GM12878 (cell line): ENCODE measurements at regions of chr1 and their contacts with region 1.

Region 1: DNA sequence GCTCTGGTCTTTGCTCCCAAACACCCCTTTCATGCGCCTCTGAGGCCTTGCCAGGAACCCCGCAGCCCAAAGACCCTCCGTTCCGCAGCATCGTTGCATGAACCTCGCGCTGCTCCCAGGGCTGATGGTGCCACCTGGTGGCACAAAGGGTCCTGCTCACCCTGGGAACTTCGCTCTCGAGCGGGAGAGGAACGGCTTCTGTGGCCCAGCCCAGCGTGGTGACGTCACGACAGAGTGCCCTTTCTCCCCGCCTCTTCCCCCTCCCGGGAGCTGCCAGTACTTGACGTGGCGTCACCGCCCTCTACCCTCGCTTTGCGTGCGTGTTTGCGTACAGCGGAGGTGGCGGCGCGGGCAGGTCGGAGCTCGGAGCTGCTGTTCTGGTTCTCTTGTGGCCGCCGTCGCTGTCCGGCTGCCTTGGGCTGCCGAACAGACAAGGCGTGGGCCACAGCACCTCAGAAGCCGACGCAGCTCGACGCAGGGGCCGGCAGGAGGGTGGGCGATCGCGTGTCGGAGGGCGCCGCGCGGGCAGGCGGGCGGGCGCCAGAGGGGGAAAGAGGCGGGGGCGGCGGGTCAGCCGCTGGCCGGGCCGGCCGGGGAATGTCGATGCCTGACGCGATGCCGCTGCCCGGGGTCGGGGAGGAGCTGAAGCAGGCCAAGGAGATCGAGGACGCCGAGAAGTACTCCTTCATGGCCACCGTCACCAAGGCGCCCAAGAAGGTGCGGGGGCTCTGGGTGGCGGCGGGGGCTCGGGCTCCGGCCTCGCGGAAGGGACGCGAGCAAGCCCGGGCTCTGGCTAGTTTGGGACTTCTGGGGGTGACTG is at the start of gene AHCYL1:
- DNase-seq: peak; percentile 94
- ATAC-seq: peak; percentile 95
- H3K4me3 ChIP-seq: peak within 1 kb of the TSS; percentile 79
- H3K27ac ChIP-seq: peak within 1 kb of the TSS; percentile 76
- H3K4me1 ChIP-seq: peaks cover 7% of the 10 kb centered on the region
- H3K27me3 ChIP-seq: no peaks in the 10 kb centered on the region
- CTCF ChIP-seq: peak; percentile 94 to 99 (median 95); a peak in 5 of 6 replicates
- EP300 ChIP-seq: peak in 1 of 2 experiments; percentile 54; a peak in 1 of 4 replicates
- POLR2A ChIP-seq: peak; percentile 98
- RAD21 ChIP-seq: peak; percentile 98
- polyA plus RNA-seq, gene AHCYL1: 24.7 to 26.1 TPM

Region 2: DNA sequence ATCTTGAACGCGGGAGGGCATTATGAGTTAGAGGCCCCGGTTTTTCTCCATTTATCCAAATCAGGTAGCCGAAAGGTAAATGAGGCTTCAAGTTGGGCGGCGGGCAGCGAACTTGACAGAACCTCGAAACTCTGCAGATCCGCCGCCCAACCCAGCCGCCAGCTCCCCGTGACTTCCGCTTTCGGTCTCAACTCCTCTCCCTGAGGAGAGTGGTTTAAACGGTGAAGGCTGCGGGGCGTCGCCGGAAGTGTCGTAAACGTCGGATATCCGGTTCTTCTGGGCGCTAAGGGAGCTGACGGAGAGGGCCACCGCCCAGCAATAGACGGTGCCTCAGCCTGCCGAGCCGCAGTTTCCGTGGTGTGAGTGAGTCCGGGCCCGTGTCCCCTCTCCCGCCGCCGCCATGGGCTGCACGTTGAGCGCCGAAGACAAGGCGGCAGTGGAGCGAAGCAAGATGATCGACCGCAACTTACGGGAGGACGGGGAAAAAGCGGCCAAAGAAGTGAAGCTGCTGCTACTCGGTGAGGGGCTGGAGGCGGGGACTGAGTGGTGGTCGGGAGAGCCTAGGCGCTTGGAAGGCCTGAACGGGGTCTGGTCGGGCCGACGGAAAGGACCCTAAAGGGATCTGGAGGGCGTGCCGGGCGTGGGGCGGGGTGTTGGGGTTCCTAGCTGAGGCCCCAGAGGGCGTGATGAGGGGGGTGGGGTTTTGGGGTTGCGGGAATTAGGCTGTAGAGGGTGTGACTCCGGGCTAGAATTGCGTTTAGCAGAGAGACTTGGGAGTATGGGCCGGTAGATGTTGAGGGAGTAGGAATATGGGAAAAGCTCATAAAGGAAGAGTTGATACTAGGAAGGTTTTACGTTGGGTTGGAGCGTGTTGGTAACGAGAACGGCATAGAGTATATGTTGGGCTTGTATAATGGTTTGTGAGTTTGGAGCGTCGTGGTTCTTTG is 436.1 kb before region 1 on chr1 and contains the start of gene GNAI3:
- CTCF ChIA-PET with region 1: interaction called, 49 read pairs
- POLR2A ChIA-PET with region 1: interaction called, 7 read pairs
- RAD21 ChIA-PET with region 1: interaction called, 38 read pairs
- SMC1A ChIA-PET with region 1: interaction called, 17 read pairs
- in situ Hi-C with region 1: loop called (anchors 5 kb)
- intact Hi-C with region 1: loop called (anchors 1 kb)
- DNase-seq: peak; percentile 85
- ATAC-seq: peak; percentile 95
- H3K4me3 ChIP-seq: peak within 1 kb of the TSS; percentile 92
- H3K27ac ChIP-seq: peak within 1 kb of the TSS; percentile 96
- H3K4me1 ChIP-seq: peaks cover 6% of the 10 kb centered on the region
- H3K27me3 ChIP-seq: no peaks in the 10 kb centered on the region
- CTCF ChIP-seq: no peak
- EP300 ChIP-seq: peak; percentile 13 to 61; a peak in 3 of 4 replicates
- POLR2A ChIP-seq: peak; percentile 99
- RAD21 ChIP-seq: no peak
- polyA plus RNA-seq, gene GNAI3: 6.2 TPM

Region 3: DNA sequence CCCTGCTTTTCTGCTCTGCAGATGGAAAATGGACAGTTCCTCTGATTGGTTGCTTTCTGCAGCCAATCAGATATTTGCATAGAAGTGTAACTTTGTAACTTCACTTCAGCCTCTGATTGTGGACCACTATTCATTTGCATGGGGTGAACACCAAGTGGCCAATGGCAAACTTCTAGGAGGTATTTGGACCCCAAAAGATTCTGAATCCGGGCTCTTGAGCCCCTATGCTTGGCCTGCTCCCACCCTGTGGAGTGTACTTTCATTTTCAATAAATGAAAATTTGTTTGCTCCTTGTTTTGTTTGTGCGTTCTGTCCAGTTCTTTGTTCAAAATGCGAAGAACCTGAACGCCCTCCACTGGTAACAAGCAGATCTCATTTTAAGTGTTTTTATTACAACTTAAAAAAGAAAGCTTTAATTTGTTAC is 335.2 kb before region 1 on chr1:
- CTCF ChIA-PET with region 1: interaction called, 53 read pairs
- POLR2A ChIA-PET with region 1: no interaction called
- RAD21 ChIA-PET with region 1: interaction called, 34 read pairs
- SMC1A ChIA-PET with region 1: interaction called, 15 read pairs
- in situ Hi-C with region 1: loop called (anchors 5 kb)
- intact Hi-C with region 1: loop called (anchors 5 kb)
- DNase-seq: no peak
- ATAC-seq: no peak
- H3K4me3 ChIP-seq: no peak overlapping the region
- H3K27ac ChIP-seq: no peak overlapping the region
- H3K4me1 ChIP-seq: no peaks in the 10 kb centered on the region
- H3K27me3 ChIP-seq: no peaks in the 10 kb centered on the region
- CTCF ChIP-seq: peak in 1 of 3 experiments; percentile 24; a peak in 1 of 6 replicates
- EP300 ChIP-seq: no peak
- POLR2A ChIP-seq: no peak
- RAD21 ChIP-seq: peak; percentile 29; the same call in 1 of the 2 replicates

Region 4: GRCh38 chr1:109773146-109773899 is 211.3 kb before region 1 on chr1:
- CTCF ChIA-PET with region 1: interaction called, 759 read pairs
- POLR2A ChIA-PET with region 1: interaction called, 23 read pairs
- RAD21 ChIA-PET with region 1: interaction called, 390 read pairs
- SMC1A ChIA-PET with region 1: interaction called, 431 read pairs
- in situ Hi-C with region 1: loop called (anchors 5 kb)
- intact Hi-C with region 1: loop called (anchors 1 kb)
- DNase-seq: peak; percentile 28
- ATAC-seq: peak; percentile 94
- H3K4me3 ChIP-seq: no peak overlapping the region
- H3K27ac ChIP-seq: no peak overlapping the region
- H3K4me1 ChIP-seq: no peaks in the 10 kb centered on the region
- H3K27me3 ChIP-seq: peaks cover 0 to 2% of the 10 kb centered on the region in 2 experiments; a peak in 1 of 4 replicates
- CTCF ChIP-seq: peak; percentile 90 to 97 (median 92)
- EP300 ChIP-seq: no peak
- POLR2A ChIP-seq: no peak
- RAD21 ChIP-seq: peak; percentile 98

Region 5: GRCh38 chr1:109816175-109816811 is 168.4 kb before region 1 on chr1:
- CTCF ChIA-PET with region 1: interaction called, 17 read pairs
- POLR2A ChIA-PET with region 1: interaction called, 5 read pairs
- RAD21 ChIA-PET with region 1: interaction called, 5 read pairs
- SMC1A ChIA-PET with region 1: interaction called, 10 read pairs
- in situ Hi-C with region 1: no loop called
- intact Hi-C with region 1: no loop called
- DNase-seq: peak; percentile 90
- ATAC-seq: peak; percentile 96
- H3K4me3 ChIP-seq: peak overlapping the region; percentile 31; the same call in 1 of the 2 replicates
- H3K27ac ChIP-seq: peak overlapping the region; percentile 57
- H3K4me1 ChIP-seq: peaks cover 27% of the 10 kb centered on the region
- H3K27me3 ChIP-seq: no peaks in the 10 kb centered on the region
- CTCF ChIP-seq: no peak
- EP300 ChIP-seq: peak; percentile 49 to 64; a peak in 3 of 4 replicates
- POLR2A ChIP-seq: no peak
- RAD21 ChIP-seq: 0 out of 2 replicates have a peak, but pooled peaks have one; percentile 7

Region 6: DNA sequence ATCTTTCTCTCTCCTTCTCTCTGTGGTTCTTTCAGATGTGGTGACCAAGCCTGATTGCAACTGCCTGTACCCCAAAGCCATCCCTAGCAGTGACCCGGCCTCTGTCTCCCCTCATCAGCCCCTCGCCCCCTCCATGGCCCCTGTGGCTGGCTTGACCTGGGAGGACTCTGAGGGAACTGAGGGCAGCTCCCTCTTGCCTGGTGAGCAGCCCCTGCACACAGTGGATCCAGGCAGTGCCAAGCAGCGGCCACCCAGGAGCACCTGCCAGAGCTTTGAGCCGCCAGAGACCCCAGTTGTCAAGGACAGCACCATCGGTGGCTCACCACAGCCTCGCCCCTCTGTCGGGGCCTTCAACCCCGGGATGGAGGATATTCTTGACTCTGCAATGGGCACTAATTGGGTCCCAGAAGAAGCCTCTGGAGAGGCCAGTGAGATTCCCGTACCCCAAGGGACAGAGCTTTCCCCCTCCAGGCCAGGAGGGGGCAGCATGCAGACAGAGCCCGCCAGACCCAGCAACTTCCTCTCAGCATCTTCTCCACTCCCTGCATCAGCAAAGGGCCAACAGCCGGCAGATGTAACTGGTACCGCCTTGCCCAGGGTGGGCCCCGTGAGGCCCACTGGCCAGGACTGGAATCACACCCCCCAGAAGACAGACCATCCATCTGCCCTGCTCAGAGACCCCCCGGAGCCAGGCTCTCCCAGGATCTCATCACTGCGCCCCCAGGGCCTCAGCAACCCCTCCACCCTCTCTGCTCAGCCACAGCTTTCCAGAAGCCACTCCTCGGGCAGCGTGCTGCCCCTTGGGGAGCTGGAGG is 61.3 kb before region 1 on chr1:
- CTCF ChIA-PET with region 1: interaction called, 12 read pairs
- POLR2A ChIA-PET with region 1: no interaction called
- RAD21 ChIA-PET with region 1: interaction called, 11 read pairs
- SMC1A ChIA-PET with region 1: interaction called, 7 read pairs
- in situ Hi-C with region 1: no loop called
- intact Hi-C with region 1: no loop called
- DNase-seq: no peak
- ATAC-seq: peak; percentile 76
- H3K4me3 ChIP-seq: no peak overlapping the region
- H3K27ac ChIP-seq: no peak overlapping the region
- H3K4me1 ChIP-seq: no peaks in the 10 kb centered on the region
- H3K27me3 ChIP-seq: no peaks in the 10 kb centered on the region
- CTCF ChIP-seq: peak; percentile 24 to 42 (median 39); a peak in 4 of 6 replicates
- EP300 ChIP-seq: no peak
- POLR2A ChIP-seq: no peak
- RAD21 ChIP-seq: peak; percentile 36; the same call in 1 of the 2 replicates

Region 7: GRCh38 chr1:110011527-110012041 is 26.9 kb after region 1 on chr1:
- CTCF ChIA-PET with region 1: interaction called, 200 read pairs
- POLR2A ChIA-PET with region 1: interaction called, 28 read pairs
- RAD21 ChIA-PET with region 1: interaction called, 94 read pairs
- SMC1A ChIA-PET with region 1: interaction called, 113 read pairs
- in situ Hi-C with region 1: no loop called
- intact Hi-C with region 1: loop called (anchors 1 kb)
- DNase-seq: peak; percentile 84
- ATAC-seq: peak; percentile 99
- H3K4me3 ChIP-seq: no peak overlapping the region
- H3K27ac ChIP-seq: peak overlapping the region; percentile 34
- H3K4me1 ChIP-seq: peaks cover 27% of the 10 kb centered on the region
- H3K27me3 ChIP-seq: no peaks in the 10 kb centered on the region
- CTCF ChIP-seq: peak; percentile 68 to 89 (median 74)
- EP300 ChIP-seq: no peak
- POLR2A ChIP-seq: no peak
- RAD21 ChIP-seq: peak; percentile 75